T-cell (primary cell): ENCODE measurements at regions of chr10 and their contacts with region 1.

Region 1: DNA sequence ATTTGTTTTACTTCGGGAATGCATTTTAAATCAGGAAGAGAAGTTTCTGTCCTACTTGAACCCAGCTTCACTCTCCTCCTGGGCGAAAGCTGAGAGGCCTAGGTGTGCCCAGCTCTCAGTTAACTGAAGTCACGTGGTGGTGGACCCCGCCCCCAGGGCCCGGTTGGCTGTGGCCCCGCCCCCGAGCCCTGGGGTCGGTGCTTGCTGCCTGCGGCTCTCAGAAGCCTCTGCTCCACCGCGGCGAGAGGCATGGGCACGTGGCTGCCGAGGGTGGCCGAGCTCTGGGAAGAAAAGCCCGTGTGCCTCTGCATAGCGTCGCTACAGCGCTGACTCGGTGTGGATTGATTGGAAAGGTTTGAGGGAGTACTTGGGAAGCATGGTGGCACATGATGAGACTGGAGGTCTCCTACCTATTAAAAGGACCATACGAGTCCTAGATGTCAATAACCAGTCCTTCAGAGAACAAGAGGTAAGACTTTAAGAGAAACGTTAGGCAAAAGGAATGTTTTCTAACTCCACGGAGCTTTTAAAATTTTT is 34.1 kb downstream of the NET1 start:
- DNase-seq: peak; percentile 57 to 90 (median 77)
- ATAC-seq: peak; percentile 85 to 94 (median 88)
- H3K4me3 ChIP-seq: peak overlapping the region; percentile 54 to 75
- H3K4me3 Mint-ChIP-seq: peak overlapping the region; percentile 82 to 84 (median 84)
- H3K27ac ChIP-seq: peak overlapping the region; percentile 36
- H3K27ac Mint-ChIP-seq: peak overlapping the region; percentile 80 to 81
- H3K4me1 ChIP-seq: peaks cover 6 to 28% of the 10 kb centered on the region in 2 experiments
- H3K4me1 Mint-ChIP-seq: peaks cover 37 to 41% (median 39%) of the 10 kb centered on the region in 3 donors
- H3K27me3 ChIP-seq: no peaks in the 10 kb centered on the region
- H3K27me3 Mint-ChIP-seq: no peaks in the 10 kb centered on the region

Region 2: GRCh38 chr10:5467155-5467535 is 20.7 kb after region 1 on chr10:
- CTCF ChIA-PET with region 1: no interaction called
- POLR2A ChIA-PET with region 1: no interaction called
- DNase-seq: no peak
- ATAC-seq: no peak
- H3K4me3 ChIP-seq: no peak overlapping the region
- H3K4me3 Mint-ChIP-seq: no peak overlapping the region
- H3K27ac ChIP-seq: no peak overlapping the region
- H3K27ac Mint-ChIP-seq: no peak overlapping the region
- H3K4me1 ChIP-seq: peaks cover 0 to 2% of the 10 kb centered on the region in 2 experiments
- H3K4me1 Mint-ChIP-seq: peaks cover 0 to 12% (median 3%) of the 10 kb centered on the region in 3 donors
- H3K27me3 ChIP-seq: no peaks in the 10 kb centered on the region
- H3K27me3 Mint-ChIP-seq: peaks cover 0 to 4% of the 10 kb centered on the region in 2 donors

Region 3: DNA sequence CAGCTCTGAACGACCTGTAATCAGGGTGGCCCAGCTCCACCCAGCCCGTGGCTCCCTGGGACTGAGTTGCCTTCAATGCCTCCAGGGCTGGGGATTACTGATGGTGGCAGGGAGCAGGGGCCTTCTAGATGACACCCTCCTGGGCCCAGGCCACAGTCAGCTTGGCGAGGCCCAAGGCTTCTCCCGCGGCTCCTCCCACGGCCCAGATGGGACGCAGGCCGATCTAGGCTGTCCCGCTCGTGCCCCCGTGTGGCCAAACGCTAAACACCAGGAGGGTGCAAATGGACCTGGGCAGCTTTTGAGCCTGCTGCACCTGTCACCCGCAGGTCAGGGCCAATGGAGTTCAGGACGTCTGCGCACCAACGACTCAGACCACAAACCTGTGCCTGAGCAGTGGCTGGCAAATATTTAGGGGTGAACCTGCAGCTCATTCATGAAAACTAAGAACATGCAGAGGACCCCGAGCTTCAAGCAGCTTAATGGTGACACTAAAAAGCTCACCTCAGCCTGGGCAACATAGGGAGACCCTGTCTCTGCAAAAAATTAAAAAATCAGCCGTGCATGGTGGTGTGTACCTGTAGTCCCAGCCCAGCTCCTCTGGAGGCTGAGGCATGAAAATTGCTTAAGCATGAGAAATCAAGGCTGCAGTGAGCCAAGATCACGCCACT is 176.8 kb after region 1 on chr10:
- CTCF ChIA-PET with region 1: interaction called, 35 to 77 read pairs
- POLR2A ChIA-PET with region 1: interaction called, 3 to 5 read pairs
- DNase-seq: peak; percentile 43 to 84 (median 70)
- ATAC-seq: peak; percentile 96 to 99 (median 97)
- H3K4me3 ChIP-seq: no peak overlapping the region
- H3K4me3 Mint-ChIP-seq: no peak overlapping the region
- H3K27ac ChIP-seq: no peak overlapping the region
- H3K27ac Mint-ChIP-seq: no peak overlapping the region
- H3K4me1 ChIP-seq: peaks cover 0 to 6% of the 10 kb centered on the region in 2 experiments
- H3K4me1 Mint-ChIP-seq: peaks cover 0 to 7% (median 0%) of the 10 kb centered on the region in 3 donors
- H3K27me3 ChIP-seq: peaks cover 0 to 15% of the 10 kb centered on the region in 2 experiments
- H3K27me3 Mint-ChIP-seq: peaks cover 0 to 5% of the 10 kb centered on the region in 2 donors

Region 4: DNA sequence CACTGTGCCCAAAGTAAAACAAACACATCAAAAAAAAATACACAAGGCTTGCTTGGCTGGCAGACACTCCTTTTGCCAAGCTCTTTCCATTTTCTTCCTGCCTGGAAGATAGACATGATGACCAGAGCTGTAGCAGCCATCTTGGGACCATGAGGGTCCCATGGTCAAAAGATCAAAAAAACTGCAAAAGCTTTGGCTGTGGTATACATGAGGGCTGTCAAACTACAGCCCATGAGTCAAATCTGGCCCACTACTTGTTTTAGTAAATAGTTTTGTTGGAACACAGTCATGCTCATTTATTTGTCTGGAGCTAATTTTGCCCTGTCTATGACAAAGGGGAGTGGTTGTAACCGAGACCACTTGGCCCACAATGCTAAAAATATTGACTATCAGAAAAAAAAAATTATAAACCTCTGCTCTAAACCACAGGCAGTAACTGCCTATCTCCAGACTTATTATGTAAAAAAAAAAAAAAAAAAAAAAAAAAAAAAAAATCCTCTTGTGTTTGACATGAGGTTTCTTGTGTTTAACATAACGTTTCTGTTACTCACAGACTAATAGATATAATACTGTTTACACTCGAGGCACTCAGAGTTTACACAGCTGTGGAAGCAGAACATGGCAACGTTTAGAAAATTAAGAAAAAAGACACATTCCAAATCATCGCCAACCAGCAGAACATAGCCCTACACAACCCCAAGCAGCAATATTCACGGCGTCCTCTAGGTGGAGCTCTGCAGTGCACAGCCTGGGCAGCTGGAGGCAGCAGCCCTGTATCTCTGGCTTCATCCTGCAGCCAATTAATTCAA is 183.0 kb after region 1 on chr10:
- CTCF ChIA-PET with region 1: interaction called, 6 to 12 read pairs
- POLR2A ChIA-PET with region 1: no interaction called
- DNase-seq: peak; percentile 51 to 90 (median 77)
- ATAC-seq: peak; percentile 93 to 98 (median 97)
- H3K4me3 ChIP-seq: no peak overlapping the region
- H3K4me3 Mint-ChIP-seq: peak overlapping the region in 1 of 3 donors; percentile 26
- H3K27ac ChIP-seq: no peak overlapping the region
- H3K27ac Mint-ChIP-seq: no peak overlapping the region
- H3K4me1 ChIP-seq: peaks cover 8 to 11% of the 10 kb centered on the region in 2 experiments
- H3K4me1 Mint-ChIP-seq: peaks cover 8 to 19% (median 16%) of the 10 kb centered on the region in 3 donors
- H3K27me3 ChIP-seq: peaks cover 0 to 11% of the 10 kb centered on the region in 2 experiments
- H3K27me3 Mint-ChIP-seq: peaks cover 3% of the 10 kb centered on the region in 2 donors

Region 5: GRCh38 chr10:5948999-5949759 is 502.7 kb after region 1 on chr10:
- CTCF ChIA-PET with region 1: no interaction called
- POLR2A ChIA-PET with region 1: no interaction called
- DNase-seq: peak in 7 of 35 experiments; percentile 6 to 31 (median 11)
- ATAC-seq: peak in 2 of 4 experiments; percentile 33 to 46
- H3K4me3 ChIP-seq: no peak overlapping the region
- H3K4me3 Mint-ChIP-seq: no peak overlapping the region
- H3K27ac ChIP-seq: no peak overlapping the region
- H3K27ac Mint-ChIP-seq: no peak overlapping the region
- H3K4me1 ChIP-seq: peaks cover 0 to 13% of the 10 kb centered on the region in 2 experiments
- H3K4me1 Mint-ChIP-seq: peaks cover 9 to 12% (median 12%) of the 10 kb centered on the region in 3 donors
- H3K27me3 ChIP-seq: no peaks in the 10 kb centered on the region
- H3K27me3 Mint-ChIP-seq: peaks cover 0 to 1% of the 10 kb centered on the region in 2 donors